T-cell (primary cell): ENCODE measurements at regions of chr1 and their contacts with region 1.

Region 1: DNA sequence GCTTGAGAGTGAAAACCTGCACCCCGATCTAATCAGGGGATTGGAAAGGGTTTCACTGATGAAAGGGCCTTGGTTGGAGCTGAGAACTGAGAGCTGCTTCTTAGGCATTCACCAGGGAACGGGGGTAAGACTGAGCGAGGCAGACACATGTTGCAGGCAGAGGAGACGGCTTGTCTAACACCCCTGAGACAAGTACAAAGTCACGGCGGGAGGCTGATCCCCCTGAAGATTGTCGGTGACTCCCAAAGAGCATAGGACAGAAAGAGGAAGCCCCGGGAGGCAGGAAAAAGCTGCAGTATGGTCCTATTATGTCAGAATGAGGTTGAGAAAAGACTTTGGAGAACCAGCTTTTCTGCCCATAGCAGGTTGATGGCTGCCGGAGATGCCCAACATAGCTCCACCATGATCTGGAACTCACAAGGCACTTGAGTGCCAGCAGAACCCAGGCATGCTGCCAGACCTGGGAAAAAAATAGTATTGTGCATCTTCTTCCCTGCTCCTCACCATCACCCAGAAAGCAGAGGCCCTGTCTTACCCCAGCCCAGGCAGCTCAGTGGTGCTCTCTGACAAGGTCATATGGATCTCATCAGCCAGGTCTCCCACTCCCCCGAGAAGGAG is 463.9 kb upstream of the PROX1 start:
- DNase-seq: no peak
- ATAC-seq: no peak
- H3K4me3 ChIP-seq: no peak overlapping the region
- H3K4me3 Mint-ChIP-seq: no peak overlapping the region
- H3K27ac ChIP-seq: no peak overlapping the region
- H3K27ac Mint-ChIP-seq: no peak overlapping the region
- H3K4me1 ChIP-seq: no peaks in the 10 kb centered on the region
- H3K4me1 Mint-ChIP-seq: no peaks in the 10 kb centered on the region
- H3K27me3 ChIP-seq: peaks cover 0 to 8% of the 10 kb centered on the region in 2 experiments
- H3K27me3 Mint-ChIP-seq: peaks cover 11 to 21% of the 10 kb centered on the region in 2 donors

Region 2: DNA sequence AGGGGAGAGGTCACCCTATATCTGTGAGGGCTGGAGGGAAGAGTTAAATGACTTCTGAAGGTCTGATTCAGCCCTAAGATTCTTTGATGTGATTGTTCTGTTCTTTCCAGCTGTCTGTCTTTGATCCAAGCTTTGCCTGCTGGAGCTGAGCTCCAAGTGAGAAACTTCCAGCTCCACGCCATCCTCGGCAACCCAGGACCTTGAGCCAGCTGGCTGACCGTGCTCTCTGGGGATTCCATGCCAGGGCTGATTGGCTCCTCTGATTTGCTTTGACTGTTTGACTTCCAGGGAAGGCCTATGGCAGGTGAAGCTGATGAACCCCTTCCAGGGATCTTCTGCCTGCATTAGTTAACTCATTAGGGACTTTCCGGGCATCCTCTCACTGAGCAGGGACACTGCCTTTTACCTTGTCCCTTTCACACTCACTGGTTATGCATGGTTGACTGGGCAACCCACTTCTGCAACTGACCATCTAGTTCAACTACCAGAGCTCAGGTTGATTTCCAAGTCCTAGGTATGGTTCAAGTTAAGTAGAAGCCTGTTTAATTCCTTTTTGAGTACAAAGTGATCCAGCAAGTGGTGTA is 66.7 kb before region 1 on chr1:
- CTCF ChIA-PET with region 1: no interaction called
- POLR2A ChIA-PET with region 1: interaction called in 1 of 2 experiments, 15 read pairs
- DNase-seq: no peak
- ATAC-seq: no peak
- H3K4me3 ChIP-seq: no peak overlapping the region
- H3K4me3 Mint-ChIP-seq: no peak overlapping the region
- H3K27ac ChIP-seq: no peak overlapping the region
- H3K27ac Mint-ChIP-seq: no peak overlapping the region
- H3K4me1 ChIP-seq: no peaks in the 10 kb centered on the region
- H3K4me1 Mint-ChIP-seq: no peaks in the 10 kb centered on the region
- H3K27me3 ChIP-seq: no peaks in the 10 kb centered on the region
- H3K27me3 Mint-ChIP-seq: peaks cover 0 to 15% of the 10 kb centered on the region in 2 donors